GM12878 (cell line): ENCODE measurements at regions of chr6 and their contacts with region 1.

Region 1: GRCh38 chr6:30212865-30213666 is at the start of gene TRIM26:
- DNase-seq: peak; percentile 89
- ATAC-seq: peak; percentile 87
- H3K4me3 ChIP-seq: peak within 1 kb of the TSS; percentile 78
- H3K27ac ChIP-seq: peak within 1 kb of the TSS; percentile 97
- H3K4me1 ChIP-seq: peaks cover 27% of the 10 kb centered on the region
- H3K27me3 ChIP-seq: no peaks in the 10 kb centered on the region
- CTCF ChIP-seq: no peak
- EP300 ChIP-seq: 0 out of 4 replicates have a peak, but pooled peaks of 1 of the 2 experiments have one; percentile 43
- POLR2A ChIP-seq: peak; percentile 97
- RAD21 ChIP-seq: no peak
- polyA plus RNA-seq, gene TRIM26: 13.1 to 18.2 TPM

Region 2: DNA sequence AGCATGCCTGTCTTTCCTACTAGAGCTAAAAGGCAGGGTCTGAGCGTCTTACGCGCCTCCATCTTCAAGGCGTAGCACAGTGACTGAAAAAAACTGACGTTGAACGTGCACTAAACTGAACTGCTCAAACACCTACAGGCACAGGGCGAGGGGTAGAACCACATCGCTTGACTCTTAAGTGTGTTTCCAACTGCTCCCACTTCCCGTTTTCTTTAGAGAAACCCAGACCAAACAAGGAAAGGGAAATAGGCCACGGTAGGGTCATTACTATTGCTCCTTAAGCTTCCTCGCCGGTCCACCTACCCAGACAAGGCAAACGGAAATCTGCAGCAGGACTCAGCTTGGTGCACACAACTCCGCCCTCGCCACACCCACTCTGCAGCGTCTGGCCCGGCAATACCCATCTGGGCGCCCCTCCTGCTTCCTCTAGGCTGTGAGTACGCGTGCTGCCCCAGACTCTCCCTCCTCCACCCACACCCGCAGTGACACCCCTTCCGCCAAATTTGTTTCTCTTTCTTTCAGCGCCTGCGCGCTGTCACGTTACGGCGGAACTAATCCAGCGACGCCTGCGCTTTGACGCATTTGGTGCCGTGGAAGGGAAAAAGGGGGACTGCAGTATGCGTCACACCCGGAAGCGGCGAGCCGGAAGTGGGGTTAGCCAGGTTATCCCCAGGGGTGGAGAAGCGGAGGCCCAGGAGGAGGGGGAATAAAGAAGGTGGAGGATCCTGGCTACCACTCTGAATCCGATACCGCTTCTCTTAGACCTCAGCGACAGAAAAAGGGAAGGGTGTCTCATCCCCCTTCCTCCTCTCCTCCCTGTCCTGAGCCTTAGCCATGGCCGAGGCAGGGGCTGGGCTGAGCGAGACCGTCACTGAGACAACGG is 146.2 kb before region 1 on chr6 and contains the start of gene PPP1R11:
- CTCF ChIA-PET with region 1: no interaction called
- POLR2A ChIA-PET with region 1: interaction called, 14 read pairs
- RAD21 ChIA-PET with region 1: no interaction called
- SMC1A ChIA-PET with region 1: no interaction called
- in situ Hi-C with region 1: no loop called
- intact Hi-C with region 1: no loop called
- DNase-seq: peak; percentile 99
- ATAC-seq: peak; percentile 99
- H3K4me3 ChIP-seq: peak within 1 kb of the TSS; percentile 84
- H3K27ac ChIP-seq: peak within 1 kb of the TSS; percentile 88
- H3K4me1 ChIP-seq: no peaks in the 10 kb centered on the region
- H3K27me3 ChIP-seq: peaks cover 0 to 3% of the 10 kb centered on the region in 2 experiments; a peak in 2 of 4 replicates
- CTCF ChIP-seq: no peak
- EP300 ChIP-seq: peak in 1 of 2 experiments; percentile 63; a peak in 2 of 4 replicates
- POLR2A ChIP-seq: peak; percentile 91
- RAD21 ChIP-seq: no peak
- polyA plus RNA-seq, gene PPP1R11: 12.6 to 13.4 TPM

Region 3: GRCh38 chr6:30227763-30228487 is 14.9 kb after region 1 on chr6:
- CTCF ChIA-PET with region 1: interaction called, 47 read pairs
- POLR2A ChIA-PET with region 1: interaction called, 20 read pairs
- RAD21 ChIA-PET with region 1: interaction called, 17 read pairs
- SMC1A ChIA-PET with region 1: interaction called, 12 read pairs
- in situ Hi-C with region 1: no loop called
- intact Hi-C with region 1: no loop called
- DNase-seq: peak; percentile 17
- ATAC-seq: peak; percentile 93
- H3K4me3 ChIP-seq: no peak overlapping the region
- H3K27ac ChIP-seq: no peak overlapping the region
- H3K4me1 ChIP-seq: no peaks in the 10 kb centered on the region
- H3K27me3 ChIP-seq: no peaks in the 10 kb centered on the region
- CTCF ChIP-seq: no peak
- EP300 ChIP-seq: no peak
- POLR2A ChIP-seq: no peak
- RAD21 ChIP-seq: no peak

Region 4: GRCh38 chr6:30326526-30327260 is 113.6 kb after region 1 on chr6 and contains the start of gene TRIM39:
- CTCF ChIA-PET with region 1: interaction called, 5 read pairs
- POLR2A ChIA-PET with region 1: interaction called, 18 read pairs
- RAD21 ChIA-PET with region 1: interaction called, 9 read pairs
- SMC1A ChIA-PET with region 1: interaction called, 5 read pairs
- in situ Hi-C with region 1: no loop called
- intact Hi-C with region 1: loop called (anchors 2 kb)
- DNase-seq: peak; percentile 26
- ATAC-seq: peak; percentile 80
- H3K4me3 ChIP-seq: peak within 1 kb of the TSS; percentile 95
- H3K27ac ChIP-seq: peak within 1 kb of the TSS; percentile 88
- H3K4me1 ChIP-seq: peaks cover 10% of the 10 kb centered on the region
- H3K27me3 ChIP-seq: no peaks in the 10 kb centered on the region
- CTCF ChIP-seq: 0 out of 6 replicates have a peak, but pooled peaks of 1 of the 3 experiments have one; percentile 5
- EP300 ChIP-seq: no peak
- POLR2A ChIP-seq: peak; percentile 90
- RAD21 ChIP-seq: no peak
- polyA plus RNA-seq, gene TRIM39: 3.0 to 3.1 TPM

Region 5: GRCh38 chr6:30344868-30345671 is 132.0 kb after region 1 on chr6 and contains the start of gene RPP21:
- CTCF ChIA-PET with region 1: interaction called, 56 read pairs
- POLR2A ChIA-PET with region 1: interaction called, 3 read pairs
- RAD21 ChIA-PET with region 1: no interaction called
- SMC1A ChIA-PET with region 1: interaction called, 3 read pairs
- in situ Hi-C with region 1: no loop called
- intact Hi-C with region 1: loop called (anchors 5 kb)
- DNase-seq: no peak
- ATAC-seq: peak; percentile 99
- H3K4me3 ChIP-seq: peak within 1 kb of the TSS; percentile 75
- H3K27ac ChIP-seq: peak within 1 kb of the TSS; percentile 66; the same call in 1 of the 2 replicates
- H3K4me1 ChIP-seq: peaks cover 13% of the 10 kb centered on the region
- H3K27me3 ChIP-seq: no peaks in the 10 kb centered on the region
- CTCF ChIP-seq: no peak
- EP300 ChIP-seq: no peak
- POLR2A ChIP-seq: peak; percentile 98
- RAD21 ChIP-seq: no peak
- polyA plus RNA-seq, gene RPP21: 39.3 to 44.3 TPM

Region 6: DNA sequence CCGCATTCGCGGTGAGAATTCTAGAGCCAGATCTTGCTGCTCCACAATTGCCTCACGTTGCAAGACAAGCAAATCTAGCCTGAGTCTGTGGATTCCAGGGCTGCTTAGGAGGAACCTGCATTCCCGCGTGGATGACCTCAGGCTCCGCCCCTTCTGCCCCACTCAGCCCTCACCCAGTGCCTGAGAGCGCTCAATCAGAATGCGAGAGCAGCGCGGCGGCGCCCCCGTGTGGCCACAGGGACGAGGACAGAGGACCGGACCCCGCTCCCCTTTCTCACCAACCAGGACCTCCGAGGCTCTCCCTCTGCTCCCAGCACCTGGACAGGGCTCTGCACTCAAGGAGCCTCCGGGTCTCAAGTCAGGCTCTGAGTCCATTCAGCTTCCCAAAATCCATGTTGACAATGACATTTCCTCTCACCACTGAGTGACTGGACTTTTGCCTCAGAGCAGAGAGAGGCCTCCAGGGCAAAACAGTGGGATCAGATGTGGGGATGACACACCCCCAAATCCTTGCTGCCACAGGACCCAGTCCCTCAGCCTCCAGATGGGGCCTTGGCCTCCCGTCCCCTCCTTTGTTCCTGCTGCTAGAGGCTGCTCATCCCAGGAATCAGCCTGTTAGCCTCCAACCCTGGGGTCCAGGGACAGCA is 183.9 kb after region 1 on chr6:
- CTCF ChIA-PET with region 1: interaction called, 40 read pairs
- POLR2A ChIA-PET with region 1: no interaction called
- RAD21 ChIA-PET with region 1: interaction called, 14 read pairs
- SMC1A ChIA-PET with region 1: interaction called, 10 read pairs
- in situ Hi-C with region 1: no loop called
- intact Hi-C with region 1: loop called (anchors 2 kb)
- DNase-seq: peak; percentile 9
- ATAC-seq: peak; percentile 100
- H3K4me3 ChIP-seq: no peak overlapping the region
- H3K27ac ChIP-seq: no peak overlapping the region
- H3K4me1 ChIP-seq: no peaks in the 10 kb centered on the region
- H3K27me3 ChIP-seq: peaks cover 0 to 3% of the 10 kb centered on the region in 2 experiments; a peak in 3 of 4 replicates
- CTCF ChIP-seq: peak; percentile 87 to 90 (median 89)
- EP300 ChIP-seq: no peak
- POLR2A ChIP-seq: no peak
- RAD21 ChIP-seq: peak; percentile 88